ENCODE measurements at regions of chrX and their contacts with region 1.

Region 1: DNA sequence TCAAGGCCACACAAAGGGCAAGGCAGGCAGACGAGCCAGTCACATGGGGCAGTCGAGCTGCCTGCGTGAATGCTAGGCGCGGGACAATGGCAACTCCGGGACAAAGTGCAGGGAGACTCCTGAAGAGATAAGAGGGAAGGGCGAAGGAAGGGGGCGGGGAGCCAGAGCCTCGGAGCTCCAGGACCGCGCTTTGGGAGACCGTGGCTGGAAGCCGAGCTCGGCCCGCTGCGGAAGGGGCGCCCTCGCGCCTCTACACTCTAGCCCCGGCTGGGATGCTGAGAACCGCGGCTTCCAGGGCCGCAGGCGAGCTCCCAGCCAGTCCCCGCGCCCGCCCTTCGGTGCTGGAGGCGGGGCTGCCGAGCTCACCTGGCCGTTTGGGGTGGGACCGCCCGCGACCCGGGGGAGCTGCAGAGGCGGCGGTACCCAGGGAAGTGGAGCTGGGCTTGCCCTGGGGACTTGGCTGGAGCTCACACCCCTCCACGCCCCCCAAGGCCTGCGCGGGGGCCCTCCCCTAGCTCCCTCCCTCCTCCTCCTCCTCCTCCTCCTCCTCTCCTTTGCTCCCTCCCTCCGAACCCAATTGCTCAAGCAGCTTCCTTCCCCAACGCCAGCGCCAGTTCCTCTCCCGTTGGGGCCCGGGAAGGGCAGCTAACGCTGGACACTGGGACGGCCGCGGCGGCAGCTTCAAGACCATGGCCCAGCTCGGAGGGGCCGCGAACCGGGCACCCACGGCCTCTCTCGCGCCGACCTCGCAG is at the start of gene SOWAHD:
- DNase-seq: peak; percentile 63
- ATAC-seq: peak; percentile 65
- H3K4me3 Mint-ChIP-seq: peak within 1 kb of the TSS; percentile 80
- H3K27ac Mint-ChIP-seq: peak within 1 kb of the TSS; percentile 95
- H3K4me1 Mint-ChIP-seq: peaks cover 36% of the 10 kb centered on the region
- H3K27me3 Mint-ChIP-seq: peaks cover 13% of the 10 kb centered on the region
- CTCF ChIP-seq: no peak
- total RNA-seq, gene SOWAHD: 3.6 to 5.0 TPM (median 4.3 TPM) in 3 replicates

Region 2: GRCh38 chrX:119574394-119575266 is 183.5 kb before region 1 on chrX and contains the start of gene UBE2A:
- CTCF ChIA-PET with region 1: interaction called, 15 read pairs
- POLR2A ChIA-PET with region 1: interaction called, 8 read pairs
- DNase-seq: peak; percentile 85
- ATAC-seq: peak; percentile 94
- H3K4me3 Mint-ChIP-seq: peak within 1 kb of the TSS; percentile 86
- H3K27ac Mint-ChIP-seq: peak within 1 kb of the TSS; percentile 92
- H3K4me1 Mint-ChIP-seq: peaks cover 8% of the 10 kb centered on the region
- H3K27me3 Mint-ChIP-seq: no peaks in the 10 kb centered on the region
- CTCF ChIP-seq: no peak
- total RNA-seq, gene UBE2A: 39.3 to 43.3 TPM (median 43.0 TPM) in 3 replicates

Region 3: GRCh38 chrX:119693040-119693995 is 64.8 kb before region 1 on chrX and contains the start of gene SEPTIN6:
- CTCF ChIA-PET with region 1: interaction called, 21 read pairs
- POLR2A ChIA-PET with region 1: interaction called, 19 read pairs
- DNase-seq: peak; percentile 86
- ATAC-seq: peak; percentile 79
- H3K4me3 Mint-ChIP-seq: peak within 1 kb of the TSS; percentile 91
- H3K27ac Mint-ChIP-seq: peak within 1 kb of the TSS; percentile 64; the same call in 1 of the 2 replicates
- H3K4me1 Mint-ChIP-seq: peaks cover 41% of the 10 kb centered on the region
- H3K27me3 Mint-ChIP-seq: peaks cover 7% of the 10 kb centered on the region
- CTCF ChIP-seq: no peak
- total RNA-seq, gene SEPTIN6: 52.1 to 62.9 TPM (median 53.6 TPM) in 3 replicates

Region 4: DNA sequence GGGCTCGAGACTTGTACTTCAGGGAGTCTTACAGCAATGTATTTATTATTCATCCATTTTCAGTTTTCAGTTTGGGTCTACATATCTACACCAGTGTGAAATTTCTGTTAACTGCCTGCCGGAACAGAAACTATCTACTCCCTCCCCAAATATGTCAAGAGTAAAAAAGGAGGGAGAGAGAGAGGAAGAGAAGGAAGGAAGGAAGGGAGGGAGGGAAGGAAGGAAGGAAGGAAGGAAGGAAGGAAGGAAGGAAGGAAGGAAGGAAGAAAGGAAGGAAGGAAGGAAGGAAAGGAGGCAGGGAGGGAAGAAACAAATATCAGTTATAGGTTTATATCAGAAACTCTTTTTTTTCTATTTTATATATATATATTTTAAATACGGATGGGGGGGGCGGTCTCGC is 20.7 kb after region 1 on chrX:
- CTCF ChIA-PET with region 1: interaction called, 13 read pairs
- POLR2A ChIA-PET with region 1: no interaction called
- DNase-seq: no peak
- ATAC-seq: no peak
- H3K4me3 Mint-ChIP-seq: no peak overlapping the region
- H3K27ac Mint-ChIP-seq: no peak overlapping the region
- H3K4me1 Mint-ChIP-seq: peaks cover 3% of the 10 kb centered on the region; the same call in 1 of the 2 replicates
- H3K27me3 Mint-ChIP-seq: no peaks in the 10 kb centered on the region
- CTCF ChIP-seq: no peak

Region 5: GRCh38 chrX:119791438-119792231 is 33.5 kb after region 1 on chrX and contains the start of gene RPL39:
- CTCF ChIA-PET with region 1: interaction called, 12 read pairs
- POLR2A ChIA-PET with region 1: interaction called, 34 read pairs
- DNase-seq: peak; percentile 78
- ATAC-seq: peak; percentile 89
- H3K4me3 Mint-ChIP-seq: peak within 1 kb of the TSS; percentile 95
- H3K27ac Mint-ChIP-seq: peak within 1 kb of the TSS; percentile 95
- H3K4me1 Mint-ChIP-seq: peaks cover 22% of the 10 kb centered on the region
- H3K27me3 Mint-ChIP-seq: no peaks in the 10 kb centered on the region
- CTCF ChIP-seq: no peak
- total RNA-seq, gene RPL39: 1,551 to 1,842 TPM (median 1,763 TPM) in 3 replicates

Measured in WTC11 (cell line).